Activated CD8-positive, alpha-beta memory T cell treated with anti-CD3 and anti-CD28 coated beads, Interleukin-2, amount 10 ng/mL, durations not matched to agents 7 days and 5 days (primary cell): ENCODE measurements at regions of chr1 and their contacts with region 1.

Region 1: DNA sequence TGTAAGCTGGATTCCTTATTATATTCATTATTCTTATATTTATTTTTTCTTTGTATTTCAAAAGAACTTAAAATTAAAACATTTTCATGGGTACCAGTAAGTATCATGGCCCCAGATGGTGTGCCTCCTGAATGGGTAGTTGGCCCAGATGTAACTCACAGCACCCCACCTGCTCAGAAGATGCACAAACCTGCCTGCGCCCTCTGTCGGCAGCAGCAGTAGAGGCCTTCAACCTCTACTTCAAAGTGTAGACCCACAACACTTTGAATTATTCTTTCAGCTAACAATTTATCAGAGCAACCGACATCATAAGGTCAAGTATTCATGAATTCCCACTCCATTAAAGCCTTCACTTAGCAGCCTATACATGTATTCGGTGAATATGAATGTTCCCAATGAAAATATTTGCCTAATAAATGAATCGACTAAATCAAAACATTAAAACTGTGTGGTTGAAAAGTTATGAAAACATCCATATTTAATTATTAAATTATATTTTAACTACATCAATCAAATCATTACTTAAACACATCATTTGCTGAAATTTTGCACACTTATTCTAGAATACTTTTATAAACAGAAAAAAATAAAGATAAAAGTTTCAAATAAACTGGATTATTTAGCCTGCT is 25.4 kb downstream of the PIGM start:
- DNase-seq: peak; percentile 83
- ATAC-seq: peak; percentile 87
- H3K4me3 Mint-ChIP-seq: no peak overlapping the region
- H3K27ac Mint-ChIP-seq: no peak overlapping the region
- H3K4me1 Mint-ChIP-seq: no peaks in the 10 kb centered on the region
- H3K27me3 Mint-ChIP-seq: peaks cover 26% of the 10 kb centered on the region

Region 2: GRCh38 chr1:159798893-159799292 is 207.5 kb before region 1 on chr1:
- CTCF ChIA-PET with region 1: interaction called, 44 read pairs
- DNase-seq: peak; percentile 70
- ATAC-seq: peak; percentile 63
- H3K4me3 Mint-ChIP-seq: no peak overlapping the region
- H3K27ac Mint-ChIP-seq: no peak overlapping the region
- H3K4me1 Mint-ChIP-seq: peaks cover 30% of the 10 kb centered on the region
- H3K27me3 Mint-ChIP-seq: peaks cover 42% of the 10 kb centered on the region

Region 3: GRCh38 chr1:159924981-159925712 is 81.3 kb before region 1 on chr1 and contains the start of gene TAGLN2:
- CTCF ChIA-PET with region 1: interaction called, 228 read pairs
- DNase-seq: peak; percentile 93
- ATAC-seq: peak; percentile 70
- H3K4me3 Mint-ChIP-seq: peak within 1 kb of the TSS; percentile 95
- H3K27ac Mint-ChIP-seq: peak within 1 kb of the TSS; percentile 98
- H3K4me1 Mint-ChIP-seq: peaks cover 41% of the 10 kb centered on the region
- H3K27me3 Mint-ChIP-seq: no peaks in the 10 kb centered on the region
- total RNA-seq, gene TAGLN2: 479 to 513 TPM

Region 4: DNA sequence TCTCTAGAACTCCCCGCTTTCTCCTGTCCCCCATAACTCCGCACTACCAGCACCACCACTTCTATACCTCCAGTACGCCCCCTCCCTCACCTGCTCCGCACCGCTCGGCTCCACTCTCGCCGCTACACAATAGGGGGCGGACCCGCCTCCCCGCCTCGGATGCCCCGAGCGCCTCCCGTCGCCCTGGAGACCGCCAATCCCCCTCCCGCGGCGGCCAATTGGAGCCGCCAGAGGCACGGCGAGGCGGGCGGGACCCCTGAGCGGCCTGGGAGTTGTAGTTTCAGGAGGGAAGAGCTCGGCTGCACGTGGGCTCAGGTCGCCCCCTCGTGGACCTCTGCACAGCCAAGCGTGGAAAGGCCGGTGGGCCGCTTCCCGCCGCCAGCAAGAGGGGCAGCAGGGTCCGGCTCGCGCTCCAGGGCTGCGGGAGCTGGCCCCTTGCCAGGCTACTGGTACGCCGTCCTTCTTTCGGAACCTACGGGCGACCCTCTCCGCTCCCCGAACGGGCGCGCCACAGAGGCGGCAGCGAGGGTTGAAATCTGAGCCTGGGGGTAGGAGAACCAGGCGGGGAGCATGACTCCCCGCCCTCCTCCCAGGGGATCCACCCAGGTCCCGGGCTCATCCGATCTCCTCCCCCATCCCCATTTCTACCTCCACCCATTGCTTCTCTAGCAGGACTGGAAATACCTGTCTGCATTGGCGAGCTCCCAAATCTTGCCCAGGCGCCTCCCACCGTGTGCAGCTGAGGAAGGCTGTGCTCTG is 60.8 kb before region 1 on chr1 and contains the start of gene IGSF9:
- CTCF ChIA-PET with region 1: interaction called, 228 read pairs
- DNase-seq: peak; percentile 76
- ATAC-seq: peak; percentile 90
- H3K4me3 Mint-ChIP-seq: peak within 1 kb of the TSS; percentile 3
- H3K27ac Mint-ChIP-seq: no peak within 1 kb of the TSS
- H3K4me1 Mint-ChIP-seq: peaks cover 6% of the 10 kb centered on the region
- H3K27me3 Mint-ChIP-seq: peaks cover 64% of the 10 kb centered on the region
- total RNA-seq, gene IGSF9: not detected

Region 5: DNA sequence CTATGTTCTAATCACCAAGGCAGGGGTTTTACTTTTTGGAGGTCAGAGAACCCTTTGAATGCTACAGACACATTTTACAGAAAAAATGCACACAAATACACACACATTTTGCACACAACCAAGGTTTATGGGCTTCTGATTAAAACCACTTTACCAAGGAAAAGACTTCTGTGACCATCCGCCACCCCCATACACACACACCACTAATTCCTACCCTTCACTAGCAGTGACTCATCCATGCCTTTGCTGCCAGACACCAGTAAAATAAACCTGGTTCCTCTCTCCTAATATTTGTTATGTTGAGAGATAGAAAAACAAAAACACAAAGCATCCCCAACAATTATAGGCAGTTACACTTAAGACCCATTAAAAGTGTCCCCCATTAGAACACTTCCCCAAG is 12.5 kb after region 1 on chr1:
- CTCF ChIA-PET with region 1: interaction called, 111 read pairs
- DNase-seq: no peak
- ATAC-seq: peak; percentile 45
- H3K4me3 Mint-ChIP-seq: no peak overlapping the region
- H3K27ac Mint-ChIP-seq: peak overlapping the region; percentile 14
- H3K4me1 Mint-ChIP-seq: peaks cover 28% of the 10 kb centered on the region
- H3K27me3 Mint-ChIP-seq: no peaks in the 10 kb centered on the region

Region 6: GRCh38 chr1:160046494-160047110 is 40.2 kb after region 1 on chr1:
- CTCF ChIA-PET with region 1: interaction called, 21 read pairs
- DNase-seq: peak; percentile 56
- ATAC-seq: peak; percentile 87
- H3K4me3 Mint-ChIP-seq: peak overlapping the region; percentile 62
- H3K27ac Mint-ChIP-seq: peak overlapping the region; percentile 42
- H3K4me1 Mint-ChIP-seq: peaks cover 12% of the 10 kb centered on the region
- H3K27me3 Mint-ChIP-seq: peaks cover 35% of the 10 kb centered on the region

Region 7: GRCh38 chr1:160167588-160167987 is 161.2 kb after region 1 on chr1:
- CTCF ChIA-PET with region 1: no interaction called
- DNase-seq: no peak
- ATAC-seq: no peak
- H3K4me3 Mint-ChIP-seq: no peak overlapping the region
- H3K27ac Mint-ChIP-seq: no peak overlapping the region
- H3K4me1 Mint-ChIP-seq: peaks cover 25% of the 10 kb centered on the region
- H3K27me3 Mint-ChIP-seq: peaks cover 53% of the 10 kb centered on the region